Sciatic nerve (tissue), 2 donors: ENCODE measurements at regions of chr11 and their contacts with region 1.

Region 1: GRCh38 chr11:15569305-15570025 is 454.7 kb downstream of the INSC start:
- DNase-seq: no peak
- ATAC-seq: peak; percentile 82

Region 2: GRCh38 chr11:15551901-15552851 is 17.3 kb before region 1 on chr11:
- intact Hi-C with region 1: loop called (anchors 1 kb)
- DNase-seq: no peak
- ATAC-seq: no peak

Region 3: DNA sequence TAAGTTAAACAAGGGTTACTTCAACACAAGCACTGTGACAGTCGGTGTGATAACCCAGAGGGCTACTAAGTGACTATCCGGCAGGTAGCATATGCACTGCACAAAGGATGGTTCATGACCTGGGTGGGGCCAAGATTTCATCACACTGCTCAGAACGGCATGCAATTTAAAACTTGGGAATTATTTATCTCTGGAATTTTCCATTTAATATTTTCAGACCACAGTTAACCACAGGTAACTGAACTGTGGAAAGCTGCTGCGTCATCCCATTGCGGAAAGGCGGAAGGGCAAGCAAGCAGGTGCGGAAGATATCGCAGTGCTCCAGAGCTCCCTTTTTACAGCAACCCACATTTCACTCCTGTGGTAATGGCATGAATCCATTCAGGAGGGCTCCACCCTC is 86.1 kb after region 1 on chr11:
- intact Hi-C with region 1: no loop called
- DNase-seq: no peak
- ATAC-seq: no peak